Activated CD4-positive, alpha-beta memory T cell treated with anti-CD3 and anti-CD28 coated beads for 36 hours (primary cell): ENCODE measurements at regions of chr6 and their contacts with region 1.

Region 1: DNA sequence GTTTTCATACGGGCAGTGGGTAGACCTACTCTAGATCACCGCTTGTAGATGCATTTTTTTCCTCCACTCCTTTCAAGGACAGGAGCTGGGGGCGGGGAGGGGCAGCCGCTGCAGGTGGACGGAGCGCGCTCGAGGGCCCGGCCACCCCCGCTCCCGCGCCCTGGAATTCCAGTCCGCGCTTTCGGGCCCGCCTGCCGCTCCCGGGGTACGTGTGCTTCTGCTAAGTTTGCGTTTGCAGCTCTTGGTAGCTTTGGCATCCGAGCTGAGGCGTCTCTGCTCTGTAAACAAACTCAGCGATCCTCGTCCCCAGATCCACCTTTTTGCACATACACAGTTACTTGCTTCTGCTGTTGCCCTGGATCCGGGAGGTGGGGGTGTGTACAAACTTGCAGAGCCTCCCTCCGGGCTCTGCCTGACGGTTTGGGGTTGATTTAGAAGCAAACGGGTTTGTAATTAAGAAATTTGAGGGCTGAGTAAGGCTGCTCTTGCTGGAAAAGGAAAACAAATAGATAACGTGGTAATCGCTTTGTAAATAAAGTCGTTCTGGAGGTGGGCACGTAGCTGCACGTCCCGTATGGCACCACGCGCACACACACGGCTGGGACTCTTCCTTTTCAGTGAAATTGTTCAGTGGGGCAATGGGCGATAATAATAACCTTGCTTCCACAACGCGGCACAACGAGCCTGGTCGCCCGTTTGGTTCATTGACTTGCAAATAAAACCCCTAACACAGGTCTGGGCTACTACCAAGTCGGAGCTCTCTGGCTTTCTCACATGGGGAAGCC is 976 bp upstream of the CITED2 start:
- DNase-seq: peak; percentile 89
- H3K4me3 Mint-ChIP-seq: peak overlapping the region; percentile 97
- H3K27ac Mint-ChIP-seq: peak overlapping the region; percentile 98
- H3K4me1 Mint-ChIP-seq: peaks cover 31% of the 10 kb centered on the region
- H3K27me3 Mint-ChIP-seq: no peaks in the 10 kb centered on the region

Region 2: DNA sequence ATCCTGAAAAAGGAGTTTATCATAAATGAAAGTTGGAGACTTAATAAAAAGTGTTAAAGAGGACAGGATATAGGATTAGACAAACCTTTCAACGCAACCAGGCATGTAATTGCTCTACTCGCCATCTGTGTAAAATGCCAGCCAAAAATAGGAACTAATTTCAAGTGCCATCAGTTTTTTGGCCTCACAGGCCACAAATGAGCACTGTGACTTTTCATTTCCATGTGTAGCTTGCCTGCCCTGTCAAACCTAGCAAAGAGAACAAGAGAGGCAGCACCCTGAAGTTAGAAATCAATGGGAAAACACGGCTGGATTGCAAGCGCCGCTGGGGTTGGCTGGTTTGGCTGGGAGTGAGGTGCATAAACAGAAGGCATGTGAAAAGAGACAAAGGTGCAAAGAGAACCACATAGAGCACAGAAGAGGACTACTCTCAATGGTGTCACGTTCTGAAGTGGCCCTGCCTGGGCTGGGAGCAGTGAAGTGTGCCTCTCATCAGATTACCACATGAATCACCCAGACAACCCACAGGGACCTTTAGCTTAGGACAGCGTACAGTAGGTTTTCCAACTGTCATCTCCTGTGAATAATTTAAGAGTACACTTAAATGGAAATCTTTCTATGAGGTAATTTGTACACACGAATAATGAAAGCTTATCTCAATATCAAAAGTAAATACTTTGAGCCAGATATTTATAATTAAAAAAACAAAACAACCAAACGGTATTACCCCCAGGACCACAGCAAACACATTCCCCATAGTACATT is 798.1 kb before region 1 on chr6:
- CTCF ChIA-PET with region 1: no interaction called
- POLR2A ChIA-PET with region 1: no interaction called
- intact Hi-C with region 1: no loop called
- DNase-seq: no peak
- H3K4me3 Mint-ChIP-seq: no peak overlapping the region
- H3K27ac Mint-ChIP-seq: no peak overlapping the region
- H3K4me1 Mint-ChIP-seq: no peaks in the 10 kb centered on the region
- H3K27me3 Mint-ChIP-seq: peaks cover 3% of the 10 kb centered on the region

Region 3: DNA sequence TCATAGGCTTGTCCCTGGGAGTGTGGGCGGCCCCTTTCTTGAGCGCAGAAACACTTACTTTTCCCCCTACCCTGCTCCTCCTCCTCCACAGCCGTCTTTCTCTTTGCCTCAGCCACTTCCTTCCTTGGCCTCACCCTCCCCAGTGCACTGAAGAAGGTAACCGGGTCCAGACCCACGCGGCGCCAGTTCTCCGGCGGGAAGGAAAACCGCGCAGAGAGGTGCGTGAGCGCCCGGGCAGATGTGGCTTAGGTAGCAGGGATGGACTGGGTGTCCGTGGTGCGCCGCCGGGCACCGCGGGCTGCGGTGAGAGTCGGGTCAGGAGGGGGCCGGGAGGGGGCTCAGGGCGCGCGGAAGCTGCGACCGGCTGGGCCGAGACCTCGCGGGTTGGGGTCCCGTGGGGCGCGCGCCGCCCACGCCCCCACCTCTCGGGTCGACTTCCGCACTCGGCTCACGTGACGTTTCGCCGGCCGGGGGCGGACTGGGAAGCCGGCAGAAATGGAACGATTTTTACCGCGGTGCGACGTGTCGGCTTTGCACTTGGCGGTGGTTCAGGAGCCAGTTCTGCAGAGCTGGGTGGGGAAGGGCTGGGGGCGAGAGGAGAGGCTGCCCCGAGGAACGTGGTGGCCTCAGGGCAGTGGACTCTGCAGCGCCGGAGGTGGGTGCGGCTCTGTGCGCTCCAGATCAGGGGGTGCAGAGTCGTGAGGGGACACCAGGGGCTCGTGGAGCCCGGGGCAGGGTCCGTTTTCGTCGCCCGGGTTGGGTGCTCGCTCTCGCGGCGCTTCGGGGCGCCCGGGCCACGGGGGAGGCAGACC is 346.6 kb before region 1 on chr6 and contains the start of gene ABRACL:
- CTCF ChIA-PET with region 1: no interaction called
- POLR2A ChIA-PET with region 1: interaction called, 4 read pairs
- intact Hi-C with region 1: loop called (anchors 2 kb)
- DNase-seq: peak; percentile 91
- H3K4me3 Mint-ChIP-seq: no peak within 1 kb of the TSS
- H3K27ac Mint-ChIP-seq: no peak within 1 kb of the TSS
- H3K4me1 Mint-ChIP-seq: peaks cover 20% of the 10 kb centered on the region
- H3K27me3 Mint-ChIP-seq: no peaks in the 10 kb centered on the region
- total RNA-seq, gene ABRACL: 179 to 182 TPM

Region 4: GRCh38 chr6:139146317-139146726 is 229.1 kb before region 1 on chr6:
- CTCF ChIA-PET with region 1: interaction called, 7 read pairs
- POLR2A ChIA-PET with region 1: interaction called, 16 read pairs
- intact Hi-C with region 1: no loop called
- DNase-seq: peak; percentile 59
- H3K4me3 Mint-ChIP-seq: peak overlapping the region; percentile 72
- H3K27ac Mint-ChIP-seq: peak overlapping the region; percentile 99
- H3K4me1 Mint-ChIP-seq: peaks cover 94% of the 10 kb centered on the region
- H3K27me3 Mint-ChIP-seq: no peaks in the 10 kb centered on the region

Region 5: GRCh38 chr6:139364302-139364981 is 11.0 kb before region 1 on chr6:
- CTCF ChIA-PET with region 1: interaction called, 20 read pairs
- POLR2A ChIA-PET with region 1: interaction called, 11 read pairs
- intact Hi-C with region 1: no loop called
- DNase-seq: no peak
- H3K4me3 Mint-ChIP-seq: no peak overlapping the region
- H3K27ac Mint-ChIP-seq: no peak overlapping the region
- H3K4me1 Mint-ChIP-seq: peaks cover 27% of the 10 kb centered on the region
- H3K27me3 Mint-ChIP-seq: no peaks in the 10 kb centered on the region

Region 6: GRCh38 chr6:139580592-139581484 is 205.4 kb after region 1 on chr6:
- CTCF ChIA-PET with region 1: interaction called, 3 read pairs
- POLR2A ChIA-PET with region 1: no interaction called
- intact Hi-C with region 1: loop called (anchors 5 kb)
- DNase-seq: no peak
- H3K4me3 Mint-ChIP-seq: peak overlapping the region; percentile 24
- H3K27ac Mint-ChIP-seq: peak overlapping the region; percentile 18
- H3K4me1 Mint-ChIP-seq: peaks cover 22% of the 10 kb centered on the region
- H3K27me3 Mint-ChIP-seq: peaks cover 14% of the 10 kb centered on the region

Region 7: GRCh38 chr6:139996253-139996834 is 620.9 kb after region 1 on chr6:
- CTCF ChIA-PET with region 1: no interaction called
- POLR2A ChIA-PET with region 1: no interaction called
- intact Hi-C with region 1: loop called (anchors 5 kb)
- DNase-seq: no peak
- H3K4me3 Mint-ChIP-seq: no peak overlapping the region
- H3K27ac Mint-ChIP-seq: no peak overlapping the region
- H3K4me1 Mint-ChIP-seq: no peaks in the 10 kb centered on the region
- H3K27me3 Mint-ChIP-seq: no peaks in the 10 kb centered on the region